ENCODE measurements at regions of chr7 and their contacts with region 1.

Region 1: GRCh38 chr7:139340037-139340807 is 915 bp upstream of the FMC1 start:
- DNase-seq: peak; percentile 98 to 100
- H3K4me3 ChIP-seq: peak overlapping the region; percentile 76
- H3K4me3 Mint-ChIP-seq: peak overlapping the region; percentile 89
- H3K27ac Mint-ChIP-seq: peak overlapping the region; percentile 100
- H3K4me1 ChIP-seq: peaks cover 4% of the 10 kb centered on the region; the same call in 1 of the 2 replicates
- H3K4me1 Mint-ChIP-seq: peaks cover 20% of the 10 kb centered on the region
- H3K27me3 ChIP-seq: no peaks in the 10 kb centered on the region
- H3K27me3 Mint-ChIP-seq: peaks cover 4% of the 10 kb centered on the region
- CTCF ChIP-seq: peak; percentile 53 to 90

Region 2: DNA sequence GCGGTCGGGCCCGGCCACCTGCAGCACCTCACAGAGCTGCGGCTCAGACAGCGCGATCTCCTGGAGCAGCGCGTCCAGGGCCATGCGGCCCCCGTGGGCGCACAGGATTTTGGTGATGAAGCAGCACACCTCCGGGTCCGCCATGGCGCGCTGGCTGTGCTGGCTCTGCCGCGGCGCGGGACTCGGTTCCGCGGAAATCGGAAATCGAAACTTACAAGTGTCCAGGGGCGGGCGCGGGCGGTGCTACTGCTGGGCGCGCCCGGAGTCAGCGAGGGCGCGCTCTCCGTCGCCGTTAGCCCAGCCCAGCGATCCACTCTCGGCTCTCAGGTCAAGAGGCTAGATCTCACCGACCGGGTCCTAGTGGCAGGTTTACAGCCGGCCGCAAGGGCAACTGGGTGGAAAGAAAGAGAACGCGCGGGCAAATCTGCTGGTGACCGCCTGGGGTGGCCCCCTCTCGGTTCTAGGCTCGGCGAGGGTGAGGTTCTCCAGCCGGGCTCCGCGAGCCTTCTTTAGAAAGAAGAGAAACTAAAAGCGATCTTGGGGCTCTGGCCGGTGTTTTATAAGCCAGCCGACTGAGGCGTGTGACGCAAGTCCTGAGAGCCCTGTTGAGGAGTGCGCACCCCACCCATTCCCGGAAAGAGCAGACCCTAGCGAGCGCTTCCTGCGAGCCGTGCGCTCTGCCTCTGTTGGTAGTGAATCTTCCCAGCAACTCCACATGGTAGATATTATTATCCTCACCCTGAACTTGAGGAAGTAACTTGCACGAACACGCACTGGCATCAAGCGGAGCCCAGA is 230.8 kb before region 1 on chr7 and contains the start of gene ZC3HAV1:
- CTCF ChIA-PET with region 1: no interaction called
- POLR2A ChIA-PET with region 1: no interaction called
- intact Hi-C with region 1: loop called (anchors 1 kb)
- DNase-seq: peak; percentile 88 to 90
- H3K4me3 ChIP-seq: peak within 1 kb of the TSS; percentile 57
- H3K4me3 Mint-ChIP-seq: peak within 1 kb of the TSS; percentile 85
- H3K27ac Mint-ChIP-seq: peak within 1 kb of the TSS; percentile 55
- H3K4me1 ChIP-seq: peaks cover 8% of the 10 kb centered on the region
- H3K4me1 Mint-ChIP-seq: peaks cover 6% of the 10 kb centered on the region
- H3K27me3 ChIP-seq: no peaks in the 10 kb centered on the region
- H3K27me3 Mint-ChIP-seq: no peaks in the 10 kb centered on the region
- CTCF ChIP-seq: peak; percentile 21 to 42
- total RNA-seq, gene ZC3HAV1: 30.8 and 30.9 TPM in 2 replicates

Region 3: GRCh38 chr7:139230774-139231512 is 109.3 kb before region 1 on chr7 and contains the start of gene UBN2:
- CTCF ChIA-PET with region 1: interaction called, 5 read pairs
- POLR2A ChIA-PET with region 1: no interaction called
- intact Hi-C with region 1: loop called (anchors 1 kb)
- DNase-seq: peak; percentile 96 to 97
- H3K4me3 ChIP-seq: peak within 1 kb of the TSS; percentile 100
- H3K4me3 Mint-ChIP-seq: peak within 1 kb of the TSS; percentile 87
- H3K27ac Mint-ChIP-seq: peak within 1 kb of the TSS; percentile 89
- H3K4me1 ChIP-seq: peaks cover 6% of the 10 kb centered on the region; the same call in 1 of the 2 replicates
- H3K4me1 Mint-ChIP-seq: peaks cover 8% of the 10 kb centered on the region
- H3K27me3 ChIP-seq: no peaks in the 10 kb centered on the region
- H3K27me3 Mint-ChIP-seq: no peaks in the 10 kb centered on the region
- CTCF ChIP-seq: no peak
- total RNA-seq, gene UBN2: 21.3 and 23.4 TPM in 2 replicates

Region 4: GRCh38 chr7:139297795-139298194 is 42.4 kb before region 1 on chr7:
- CTCF ChIA-PET with region 1: no interaction called
- POLR2A ChIA-PET with region 1: interaction called, 8 read pairs
- intact Hi-C with region 1: loop called (anchors 1 kb)
- DNase-seq: peak; percentile 62 to 74
- H3K4me3 ChIP-seq: no peak overlapping the region
- H3K4me3 Mint-ChIP-seq: peak overlapping the region; percentile 58
- H3K27ac Mint-ChIP-seq: peak overlapping the region; percentile 56
- H3K4me1 ChIP-seq: peaks cover 60% of the 10 kb centered on the region
- H3K4me1 Mint-ChIP-seq: peaks cover 22% of the 10 kb centered on the region
- H3K27me3 ChIP-seq: no peaks in the 10 kb centered on the region
- H3K27me3 Mint-ChIP-seq: no peaks in the 10 kb centered on the region
- CTCF ChIP-seq: no peak

Region 5: DNA sequence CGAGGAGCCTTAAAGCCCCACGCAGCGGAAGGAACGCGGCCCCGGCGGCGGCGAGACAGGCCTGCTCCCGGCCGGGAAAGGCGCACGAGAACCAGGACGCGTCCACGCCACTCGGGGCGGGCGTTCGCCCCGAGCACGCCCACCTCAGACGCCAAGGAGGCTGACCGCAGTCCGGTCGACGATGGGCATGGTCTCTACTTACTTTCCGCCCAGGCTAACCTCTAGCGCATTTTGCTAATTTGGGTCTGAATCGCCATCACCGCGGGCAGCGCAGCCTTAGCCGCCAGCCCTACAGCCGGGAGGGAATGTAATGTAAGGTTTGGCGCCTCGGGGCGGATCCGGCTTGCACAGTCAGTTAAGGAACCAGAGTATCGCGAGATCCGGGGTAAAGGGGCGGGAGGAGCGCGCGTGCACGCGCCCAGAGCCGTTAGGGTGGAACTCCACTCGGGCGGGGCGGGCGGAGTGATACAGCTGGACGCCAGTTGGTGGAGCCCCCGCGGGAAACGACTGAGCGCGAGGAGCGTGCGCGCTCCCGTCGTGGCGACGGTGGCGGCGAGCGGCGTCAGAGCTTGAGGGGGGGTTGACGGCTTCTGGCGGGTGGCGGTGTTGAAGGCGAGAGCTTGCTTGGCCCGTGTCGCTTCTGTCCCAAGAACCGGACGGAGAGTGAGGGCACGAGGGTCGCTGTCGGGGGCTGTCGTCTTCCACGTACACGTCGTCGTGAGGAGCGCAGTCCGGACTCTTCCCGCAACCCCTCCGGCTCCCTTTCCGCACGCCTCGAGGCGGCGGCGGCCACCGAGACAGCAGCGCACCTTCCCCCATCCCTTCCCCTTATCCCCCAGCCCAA is 19.4 kb after region 1 on chr7 and contains the start of gene LUC7L2:
- CTCF ChIA-PET with region 1: interaction called, 6 read pairs
- POLR2A ChIA-PET with region 1: interaction called, 6 read pairs
- intact Hi-C with region 1: loop called (anchors 1 kb)
- DNase-seq: peak; percentile 99
- H3K4me3 ChIP-seq: peak within 1 kb of the TSS; percentile 100
- H3K4me3 Mint-ChIP-seq: peak within 1 kb of the TSS; percentile 99
- H3K27ac Mint-ChIP-seq: peak within 1 kb of the TSS; percentile 98
- H3K4me1 ChIP-seq: no peaks in the 10 kb centered on the region
- H3K4me1 Mint-ChIP-seq: peaks cover 7% of the 10 kb centered on the region
- H3K27me3 ChIP-seq: no peaks in the 10 kb centered on the region
- H3K27me3 Mint-ChIP-seq: no peaks in the 10 kb centered on the region
- CTCF ChIP-seq: peak in 1 of 2 experiments; percentile 5
- total RNA-seq, gene LUC7L2: 74.2 and 75.8 TPM in 2 replicates

Measured in Caco-2 (cell line).